Natural killer cell (primary cell): ENCODE measurements at regions of chr17 and their contacts with region 1.

Region 1: GRCh38 chr17:35612924-35613521 is 25.9 kb downstream of the AP2B1 start:
- DNase-seq: peak in 1 of 2 donors; percentile 58
- ATAC-seq: no peak
- H3K4me3 ChIP-seq: no peak overlapping the region
- H3K4me3 Mint-ChIP-seq: no peak overlapping the region
- H3K27ac ChIP-seq: no peak overlapping the region
- H3K27ac Mint-ChIP-seq: no peak overlapping the region
- H3K4me1 ChIP-seq: no peaks in the 10 kb centered on the region
- H3K4me1 Mint-ChIP-seq: no peaks in the 10 kb centered on the region
- H3K27me3 ChIP-seq: no peaks in the 10 kb centered on the region
- H3K27me3 Mint-ChIP-seq: no peaks in the 10 kb centered on the region
- CTCF ChIP-seq: no peak

Region 2: DNA sequence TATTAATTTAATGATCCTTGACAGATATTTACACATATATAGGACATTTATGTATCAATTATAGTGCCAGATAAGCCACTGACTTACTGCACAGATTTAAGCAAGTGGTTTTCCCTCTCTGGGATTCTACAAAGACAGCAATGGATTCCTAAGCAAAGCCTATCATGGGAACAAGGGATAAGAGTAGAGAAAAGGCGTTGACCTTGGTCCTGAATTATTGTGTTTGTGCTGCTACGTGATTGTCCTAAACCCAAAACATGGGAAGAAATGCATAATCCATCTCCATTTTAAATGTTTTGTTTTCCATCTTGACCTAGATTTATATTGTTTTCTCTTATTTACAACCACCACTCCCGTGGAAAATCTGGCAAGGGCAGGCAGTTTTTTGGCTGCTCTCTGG is 253.6 kb before region 1 on chr17:
- intact Hi-C with region 1: no loop called
- DNase-seq: no peak
- ATAC-seq: no peak
- H3K4me3 ChIP-seq: no peak overlapping the region
- H3K4me3 Mint-ChIP-seq: no peak overlapping the region
- H3K27ac ChIP-seq: no peak overlapping the region
- H3K27ac Mint-ChIP-seq: no peak overlapping the region
- H3K4me1 ChIP-seq: no peaks in the 10 kb centered on the region
- H3K4me1 Mint-ChIP-seq: peaks cover 0 to 5% of the 10 kb centered on the region in 2 donors
- H3K27me3 ChIP-seq: no peaks in the 10 kb centered on the region
- H3K27me3 Mint-ChIP-seq: no peaks in the 10 kb centered on the region
- CTCF ChIP-seq: no peak

Region 3: DNA sequence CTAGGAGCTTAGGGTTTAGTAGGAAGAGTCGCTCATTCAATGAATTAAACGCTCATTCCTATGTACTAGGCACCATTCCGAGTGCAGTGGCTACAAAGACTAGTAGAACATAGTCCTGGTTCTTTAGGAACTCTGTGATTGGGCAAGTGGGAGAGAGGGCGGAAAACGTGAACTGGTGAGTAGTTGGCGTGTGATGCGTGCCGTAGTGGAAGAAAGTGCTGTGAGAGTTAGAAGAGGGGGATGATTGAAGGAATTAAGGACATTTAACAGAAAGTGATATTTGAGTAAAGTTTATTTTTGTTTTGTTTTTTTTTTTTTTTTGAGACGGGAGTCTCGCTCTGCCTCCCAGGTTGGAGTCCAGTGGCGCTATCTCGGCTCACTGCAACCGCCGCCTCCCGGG is 44.5 kb before region 1 on chr17:
- intact Hi-C with region 1: no loop called
- DNase-seq: peak in 1 of 2 donors; percentile 54
- ATAC-seq: peak in 2 of 3 donors; percentile 7 to 12
- H3K4me3 ChIP-seq: peak overlapping the region; percentile 83
- H3K4me3 Mint-ChIP-seq: peak overlapping the region; percentile 97
- H3K27ac ChIP-seq: no peak overlapping the region
- H3K27ac Mint-ChIP-seq: peak overlapping the region; percentile 92 to 97
- H3K4me1 ChIP-seq: peaks cover 21% of the 10 kb centered on the region
- H3K4me1 Mint-ChIP-seq: peaks cover 26 to 27% of the 10 kb centered on the region in 2 donors
- H3K27me3 ChIP-seq: no peaks in the 10 kb centered on the region
- H3K27me3 Mint-ChIP-seq: peaks cover 0 to 7% of the 10 kb centered on the region in 2 donors
- CTCF ChIP-seq: no peak

Region 4: GRCh38 chr17:35747540-35748017 is 134.6 kb after region 1 on chr17:
- intact Hi-C with region 1: loop called (anchors 1 kb)
- DNase-seq: peak; percentile 76 to 91
- ATAC-seq: peak; percentile 88 to 99 (median 99)
- H3K4me3 ChIP-seq: no peak overlapping the region
- H3K4me3 Mint-ChIP-seq: no peak overlapping the region
- H3K27ac ChIP-seq: no peak overlapping the region
- H3K27ac Mint-ChIP-seq: no peak overlapping the region
- H3K4me1 ChIP-seq: peaks cover 6% of the 10 kb centered on the region
- H3K4me1 Mint-ChIP-seq: peaks cover 0 to 4% of the 10 kb centered on the region in 2 donors
- H3K27me3 ChIP-seq: peaks cover 17% of the 10 kb centered on the region
- H3K27me3 Mint-ChIP-seq: peaks cover 42 to 43% of the 10 kb centered on the region in 2 donors
- CTCF ChIP-seq: peak; percentile 91